ENCODE measurements at regions of chr2 and their contacts with region 1.

Region 1: DNA sequence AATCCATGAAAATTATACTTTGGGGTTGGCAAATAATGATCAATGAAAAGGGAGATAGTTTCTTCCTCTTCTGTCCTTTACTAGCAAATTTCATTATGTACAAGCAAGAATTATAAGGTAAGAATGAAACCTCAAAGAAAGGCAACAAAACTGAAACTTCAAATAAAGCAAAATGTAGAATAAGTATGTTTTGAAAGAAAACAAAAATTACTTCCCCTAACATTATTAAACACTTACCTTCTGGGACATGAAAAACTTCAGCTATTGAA is 29.4 kb downstream of the THADA start:
- DNase-seq: no peak
- H3K4me3 ChIP-seq: no peak overlapping the region
- H3K27me3 ChIP-seq: no peaks in the 10 kb centered on the region
- CTCF ChIP-seq: no peak

Region 2: DNA sequence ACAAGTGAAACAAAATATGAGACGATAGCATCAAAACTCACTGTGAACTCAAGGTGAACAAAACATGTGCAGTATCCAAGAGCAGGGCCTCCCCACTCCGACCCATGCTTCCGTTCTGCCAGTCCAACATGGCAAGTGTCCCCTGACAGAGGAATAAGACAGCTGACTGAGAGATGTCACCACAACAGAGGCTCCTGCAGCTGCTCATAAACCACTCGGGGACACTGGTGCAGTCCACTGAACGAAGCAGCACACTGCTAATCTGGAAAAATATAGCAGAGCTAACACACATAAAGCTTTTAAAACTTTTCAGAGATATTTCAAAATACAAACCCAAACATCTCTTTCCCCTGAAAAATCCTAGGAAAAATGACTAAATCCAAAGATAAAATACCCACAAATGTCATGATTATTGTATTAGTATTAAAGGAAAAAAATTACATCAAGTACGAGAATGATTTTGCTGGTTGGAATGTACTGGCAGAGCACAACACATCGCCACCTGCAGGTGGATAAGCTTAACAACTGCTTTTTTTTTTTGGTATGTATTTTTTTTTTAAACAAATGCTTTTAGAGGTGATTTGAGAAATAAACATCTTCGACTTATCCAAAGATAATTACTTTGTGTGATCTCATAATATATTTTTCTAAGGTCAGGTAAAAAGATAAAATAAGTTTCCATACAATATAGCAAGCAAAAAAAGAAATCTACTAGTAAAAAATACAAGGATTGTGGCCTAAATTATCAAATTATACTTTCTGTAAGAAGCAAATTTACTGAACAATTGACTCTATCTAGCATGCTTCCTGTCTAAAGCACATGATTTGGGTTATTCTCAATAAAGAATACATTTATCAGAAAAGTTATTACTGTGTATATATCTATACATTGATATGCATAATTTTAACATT is 10.8 kb after region 1 on chr2:
- CTCF ChIA-PET with region 1: interaction called, 13 read pairs
- POLR2A ChIA-PET with region 1: interaction called, 5 read pairs
- DNase-seq: no peak
- H3K4me3 ChIP-seq: no peak overlapping the region
- H3K27me3 ChIP-seq: no peaks in the 10 kb centered on the region
- CTCF ChIP-seq: peak; percentile 76

Measured in BJ (cell line).